MCF 10A (cell line): ENCODE measurements at regions of chr7 and their contacts with region 1.

Region 1: DNA sequence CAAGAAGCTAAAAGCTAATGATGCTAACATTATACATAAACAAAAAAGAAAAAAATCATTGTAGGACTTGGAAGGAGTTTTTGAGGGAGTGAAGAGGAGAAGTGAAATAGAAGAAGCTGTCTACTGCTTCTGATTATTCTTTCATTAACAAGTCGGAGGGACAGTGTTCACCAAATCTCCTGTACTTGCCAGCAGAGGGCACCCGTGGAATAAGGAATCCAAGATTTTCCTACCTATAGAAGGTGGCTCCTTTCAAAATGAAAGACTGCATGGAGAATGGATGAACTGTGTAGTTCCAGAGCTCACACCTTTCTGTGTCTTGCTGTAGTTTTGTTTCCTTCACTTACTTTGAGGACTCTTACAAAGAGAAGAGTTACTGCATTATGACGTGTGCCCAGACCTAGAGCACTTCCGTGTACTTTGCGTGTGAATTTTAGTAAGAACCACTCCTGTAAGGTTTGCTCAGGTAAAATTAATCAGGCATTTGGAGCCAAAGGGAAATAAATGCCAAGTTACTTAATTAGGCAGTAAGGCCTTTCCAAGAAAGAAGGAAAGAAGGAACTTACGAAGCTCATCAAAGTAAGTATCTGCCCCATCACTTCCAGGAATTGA is 145.1 kb downstream of the SEMA3D start:
- DNase-seq: peak; percentile 74
- H3K4me3 Mint-ChIP-seq: no peak overlapping the region
- H3K27ac Mint-ChIP-seq: no peak overlapping the region
- H3K4me1 Mint-ChIP-seq: no peaks in the 10 kb centered on the region
- H3K27me3 Mint-ChIP-seq: peaks cover 53% of the 10 kb centered on the region
- CTCF ChIP-seq: peak; percentile 71

Region 2: GRCh38 chr7:84510505-84510904 is 531.2 kb before region 1 on chr7:
- CTCF ChIA-PET with region 1: no interaction called
- POLR2A ChIA-PET with region 1: no interaction called
- intact Hi-C with region 1: no loop called
- DNase-seq: peak; percentile 1
- H3K4me3 Mint-ChIP-seq: no peak overlapping the region
- H3K27ac Mint-ChIP-seq: no peak overlapping the region
- H3K4me1 Mint-ChIP-seq: peaks cover 7% of the 10 kb centered on the region
- H3K27me3 Mint-ChIP-seq: no peaks in the 10 kb centered on the region
- CTCF ChIP-seq: no peak

Region 3: DNA sequence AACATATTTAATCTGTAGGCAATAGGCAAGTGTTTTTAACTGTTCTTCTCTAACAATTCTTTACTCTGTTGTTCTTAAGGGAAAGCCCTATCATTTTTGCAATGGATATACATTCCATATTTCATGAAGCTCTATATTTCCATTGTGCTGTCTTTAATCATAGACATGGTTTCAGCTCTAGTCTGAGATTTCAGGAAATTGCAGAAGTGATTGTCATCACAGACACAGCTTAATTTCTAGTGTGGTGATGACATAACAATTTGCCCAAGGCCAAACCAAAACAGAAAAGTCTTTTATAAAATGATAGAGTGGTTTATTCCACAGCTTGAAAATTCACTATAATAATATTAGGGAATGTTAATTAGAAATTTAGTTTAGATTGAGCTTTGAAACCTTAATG is 353.0 kb before region 1 on chr7:
- CTCF ChIA-PET with region 1: no interaction called
- POLR2A ChIA-PET with region 1: no interaction called
- intact Hi-C with region 1: no loop called
- DNase-seq: peak; percentile 37
- H3K4me3 Mint-ChIP-seq: no peak overlapping the region
- H3K27ac Mint-ChIP-seq: no peak overlapping the region
- H3K4me1 Mint-ChIP-seq: peaks cover 13% of the 10 kb centered on the region
- H3K27me3 Mint-ChIP-seq: no peaks in the 10 kb centered on the region
- CTCF ChIP-seq: no peak

Region 4: DNA sequence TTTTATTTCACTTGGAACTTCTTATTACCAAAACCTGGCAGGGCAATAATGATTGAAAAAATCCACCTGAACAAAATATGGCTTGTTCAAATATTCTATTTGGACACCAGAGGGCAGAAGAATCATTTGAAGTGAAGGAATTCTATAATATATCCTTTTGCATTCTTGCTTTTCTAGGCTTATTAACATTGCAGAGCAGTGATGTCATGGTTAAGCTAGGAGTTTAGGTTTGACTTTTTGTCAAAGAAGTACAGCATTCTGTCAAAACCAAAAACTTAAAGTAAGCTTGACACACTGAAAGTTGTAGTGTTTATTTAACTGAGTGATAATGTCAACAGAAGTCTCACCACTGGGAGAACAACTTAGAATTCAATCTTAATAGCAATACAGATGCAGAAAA is 10.8 kb before region 1 on chr7:
- CTCF ChIA-PET with region 1: interaction called, 38 read pairs
- POLR2A ChIA-PET with region 1: no interaction called
- intact Hi-C with region 1: no loop called
- DNase-seq: peak; percentile 35
- H3K4me3 Mint-ChIP-seq: no peak overlapping the region
- H3K27ac Mint-ChIP-seq: no peak overlapping the region
- H3K4me1 Mint-ChIP-seq: peaks cover 6% of the 10 kb centered on the region
- H3K27me3 Mint-ChIP-seq: peaks cover 50% of the 10 kb centered on the region
- CTCF ChIP-seq: peak; percentile 39

Region 5: GRCh38 chr7:85186521-85187241 is 145.0 kb after region 1 on chr7 and contains the start of gene SEMA3D:
- CTCF ChIA-PET with region 1: interaction called, 3 read pairs
- POLR2A ChIA-PET with region 1: no interaction called
- intact Hi-C with region 1: loop called (anchors 1 kb)
- DNase-seq: peak; percentile 47
- H3K4me3 Mint-ChIP-seq: peak within 1 kb of the TSS; percentile 50
- H3K27ac Mint-ChIP-seq: no peak within 1 kb of the TSS
- H3K4me1 Mint-ChIP-seq: peaks cover 10% of the 10 kb centered on the region
- H3K27me3 Mint-ChIP-seq: peaks cover 84% of the 10 kb centered on the region
- CTCF ChIP-seq: peak; percentile 59
- total RNA-seq, gene SEMA3D: not detected in 2 replicates

Region 6: GRCh38 chr7:85554236-85555178 is 512.8 kb after region 1 on chr7:
- CTCF ChIA-PET with region 1: interaction called, 9 read pairs
- POLR2A ChIA-PET with region 1: interaction called, 3 read pairs
- intact Hi-C with region 1: loop called (anchors 2 kb)
- DNase-seq: peak; percentile 54
- H3K4me3 Mint-ChIP-seq: no peak overlapping the region
- H3K27ac Mint-ChIP-seq: no peak overlapping the region
- H3K4me1 Mint-ChIP-seq: no peaks in the 10 kb centered on the region
- H3K27me3 Mint-ChIP-seq: peaks cover 52% of the 10 kb centered on the region
- CTCF ChIP-seq: peak; percentile 78

Region 7: GRCh38 chr7:85829817-85830432 is 788.2 kb after region 1 on chr7:
- CTCF ChIA-PET with region 1: interaction called, 82 read pairs
- POLR2A ChIA-PET with region 1: no interaction called
- intact Hi-C with region 1: loop called (anchors 1 kb)
- DNase-seq: peak; percentile 12
- H3K4me3 Mint-ChIP-seq: no peak overlapping the region
- H3K27ac Mint-ChIP-seq: no peak overlapping the region
- H3K4me1 Mint-ChIP-seq: no peaks in the 10 kb centered on the region
- H3K27me3 Mint-ChIP-seq: peaks cover 58% of the 10 kb centered on the region
- CTCF ChIP-seq: peak; percentile 38